ENCODE measurements at regions of chr1 and their contacts with region 1.

Region 1: DNA sequence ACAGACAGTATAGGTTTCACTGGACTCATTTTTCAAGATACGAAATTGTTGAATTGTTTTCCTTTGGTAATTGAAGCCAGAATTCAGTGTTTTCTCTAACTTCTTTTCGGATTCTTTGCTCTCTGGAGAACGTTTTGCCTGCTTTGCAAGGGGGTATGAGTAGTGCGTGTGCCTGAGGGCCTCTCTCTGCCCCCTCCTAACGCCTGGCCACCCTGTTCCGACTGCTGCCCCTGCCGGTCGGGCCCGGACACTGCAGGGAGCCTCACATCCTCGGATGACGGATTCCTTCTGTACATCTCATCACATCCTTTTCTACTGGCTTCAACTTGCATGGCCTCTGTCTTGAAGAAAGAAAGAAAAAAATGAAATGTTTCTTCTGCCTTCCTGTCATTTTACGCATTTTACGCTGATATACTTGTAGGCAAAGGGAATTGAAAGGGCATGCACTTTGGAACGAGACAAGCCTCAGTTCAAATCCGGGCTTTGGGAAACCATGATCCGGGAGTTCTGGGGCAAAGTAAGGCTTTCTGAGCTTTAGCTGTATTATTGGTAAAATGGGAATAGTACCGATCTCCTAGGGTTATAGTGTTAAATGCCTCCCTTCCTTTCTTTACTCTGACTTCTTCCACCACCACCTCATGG is 65.1 kb downstream of the DISC1 start:
- DNase-seq: peak; percentile 38 to 86
- H3K4me3 ChIP-seq: no peak overlapping the region
- H3K27ac ChIP-seq: no peak overlapping the region
- H3K4me1 ChIP-seq: peaks cover 3 to 10% (median 4%) of the 10 kb centered on the region in 4 experiments
- H3K27me3 ChIP-seq: no peaks in the 10 kb centered on the region; a peak in 1 of 7 replicates
- CTCF ChIP-seq: peak; percentile 66 to 100 (median 96)
- EP300 ChIP-seq: no peak
- POLR2A ChIP-seq: no peak
- RAD21 ChIP-seq: peak; percentile 47 to 57

Region 2: GRCh38 chr1:231643071-231643934 is 48.4 kb before region 1 on chr1:
- CTCF ChIA-PET with region 1: interaction called, 13 read pairs
- POLR2A ChIA-PET with region 1: no interaction called
- DNase-seq: no peak
- H3K4me3 ChIP-seq: no peak overlapping the region
- H3K27ac ChIP-seq: no peak overlapping the region
- H3K4me1 ChIP-seq: no peaks in the 10 kb centered on the region
- H3K27me3 ChIP-seq: no peaks in the 10 kb centered on the region
- CTCF ChIP-seq: no peak
- EP300 ChIP-seq: no peak
- POLR2A ChIP-seq: no peak
- RAD21 ChIP-seq: no peak

Region 3: DNA sequence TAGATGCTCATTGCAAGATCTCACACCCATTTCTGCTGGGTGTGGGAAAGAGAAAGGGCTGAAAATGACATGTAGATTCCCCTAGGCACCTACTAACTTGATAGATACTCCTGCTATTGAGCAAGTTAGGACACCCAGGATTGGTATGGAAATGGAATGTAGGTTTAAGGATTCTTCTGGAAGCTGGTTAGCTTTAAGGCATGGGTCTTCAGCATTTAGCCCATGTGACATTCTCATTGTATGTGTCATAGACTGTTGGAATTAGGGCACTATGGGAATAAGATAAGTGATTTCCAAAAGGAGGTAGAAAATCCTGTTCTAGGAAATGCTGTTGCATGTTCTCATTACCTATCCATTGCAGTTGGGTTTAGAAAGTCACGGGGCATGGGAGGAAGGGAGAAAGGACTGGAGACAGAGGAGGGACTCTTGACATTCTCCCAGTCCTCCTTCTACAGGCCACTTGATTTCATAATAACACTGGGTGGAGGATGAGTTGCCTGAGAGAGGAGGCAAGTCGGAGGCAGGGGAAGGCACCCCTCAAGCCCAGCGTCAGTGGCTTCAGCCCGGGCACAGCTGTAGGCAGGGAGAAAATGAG is 11.2 kb after region 1 on chr1:
- CTCF ChIA-PET with region 1: interaction called, 18 read pairs
- POLR2A ChIA-PET with region 1: no interaction called
- DNase-seq: no peak
- H3K4me3 ChIP-seq: no peak overlapping the region
- H3K27ac ChIP-seq: no peak overlapping the region
- H3K4me1 ChIP-seq: no peaks in the 10 kb centered on the region
- H3K27me3 ChIP-seq: no peaks in the 10 kb centered on the region
- CTCF ChIP-seq: no peak
- EP300 ChIP-seq: no peak
- POLR2A ChIP-seq: no peak
- RAD21 ChIP-seq: no peak

Region 4: GRCh38 chr1:231708394-231708793 is 16.7 kb after region 1 on chr1:
- CTCF ChIA-PET with region 1: interaction called, 25 read pairs
- POLR2A ChIA-PET with region 1: no interaction called
- DNase-seq: no peak
- H3K4me3 ChIP-seq: no peak overlapping the region
- H3K27ac ChIP-seq: no peak overlapping the region
- H3K4me1 ChIP-seq: no peaks in the 10 kb centered on the region
- H3K27me3 ChIP-seq: no peaks in the 10 kb centered on the region
- CTCF ChIP-seq: no peak
- EP300 ChIP-seq: no peak
- POLR2A ChIP-seq: no peak
- RAD21 ChIP-seq: no peak

Region 5: GRCh38 chr1:231724876-231725724 is 33.4 kb after region 1 on chr1:
- CTCF ChIA-PET with region 1: no interaction called
- POLR2A ChIA-PET with region 1: no interaction called
- DNase-seq: peak; percentile 51 to 71
- H3K4me3 ChIP-seq: no peak overlapping the region
- H3K27ac ChIP-seq: no peak overlapping the region
- H3K4me1 ChIP-seq: peaks cover 0 to 4% (median 0%) of the 10 kb centered on the region in 4 experiments; a peak in 1 of 7 replicates
- H3K27me3 ChIP-seq: no peaks in the 10 kb centered on the region
- CTCF ChIP-seq: peak; percentile 71 to 86 (median 72)
- EP300 ChIP-seq: no peak
- POLR2A ChIP-seq: no peak
- RAD21 ChIP-seq: peak; percentile 82 to 85

Region 6: GRCh38 chr1:231743966-231744365 is 52.2 kb after region 1 on chr1:
- CTCF ChIA-PET with region 1: no interaction called
- POLR2A ChIA-PET with region 1: no interaction called
- DNase-seq: no peak
- H3K4me3 ChIP-seq: no peak overlapping the region
- H3K27ac ChIP-seq: no peak overlapping the region
- H3K4me1 ChIP-seq: no peaks in the 10 kb centered on the region
- H3K27me3 ChIP-seq: no peaks in the 10 kb centered on the region
- CTCF ChIP-seq: no peak
- EP300 ChIP-seq: no peak
- POLR2A ChIP-seq: no peak
- RAD21 ChIP-seq: no peak

Region 7: DNA sequence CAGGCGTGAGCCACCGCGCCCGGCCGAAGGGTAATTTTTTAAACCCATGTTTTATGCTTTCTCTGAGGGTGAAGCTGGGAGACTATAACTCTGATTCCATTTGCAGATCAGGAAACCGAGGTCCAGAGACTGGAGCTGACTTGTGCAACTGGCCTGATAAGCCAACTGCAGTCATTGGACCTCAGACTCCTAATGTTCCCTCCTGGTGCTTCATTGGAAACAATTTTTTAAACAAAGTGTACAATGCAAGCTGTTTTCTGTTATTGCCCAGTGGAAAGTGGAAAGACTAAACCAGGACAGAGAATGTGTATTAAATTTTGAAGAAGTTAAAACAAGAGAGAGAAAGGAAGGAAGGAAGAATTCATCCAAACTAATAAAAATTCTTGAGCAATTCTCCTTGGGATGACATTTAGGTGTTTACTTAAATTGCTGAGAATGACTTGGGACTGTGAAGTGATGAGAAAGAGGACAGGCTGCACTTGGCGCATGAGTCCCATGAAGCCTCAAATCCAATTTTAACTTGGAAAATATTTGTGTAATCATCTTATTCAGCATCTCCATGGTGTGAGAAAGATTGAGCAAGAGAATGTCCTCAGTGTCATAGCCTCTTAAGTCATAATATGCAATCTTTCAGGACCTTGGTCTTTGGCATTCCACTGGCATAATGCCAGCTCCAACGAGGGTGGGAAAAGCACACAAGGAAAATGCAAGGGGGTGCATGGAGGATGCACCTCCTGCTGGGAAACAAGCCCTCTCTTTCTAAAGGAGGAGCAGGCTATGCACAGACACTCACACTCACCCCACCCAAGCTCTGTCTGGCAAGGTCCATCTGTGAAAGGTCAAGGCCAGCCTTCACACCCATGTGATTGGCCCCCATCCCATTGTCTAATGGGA is 596.2 kb after region 1 on chr1:
- CTCF ChIA-PET with region 1: no interaction called
- POLR2A ChIA-PET with region 1: no interaction called
- DNase-seq: no peak
- H3K4me3 ChIP-seq: no peak overlapping the region
- H3K27ac ChIP-seq: no peak overlapping the region
- H3K4me1 ChIP-seq: no peaks in the 10 kb centered on the region; a peak in 1 of 7 replicates
- H3K27me3 ChIP-seq: no peaks in the 10 kb centered on the region
- CTCF ChIP-seq: no peak
- EP300 ChIP-seq: no peak
- POLR2A ChIP-seq: no peak
- RAD21 ChIP-seq: no peak

Measured in H1 (cell line).